Naive thymus-derived CD4-positive, alpha-beta T cell (primary cell): ENCODE measurements at regions of chr17 and their contacts with region 1.

Region 1: DNA sequence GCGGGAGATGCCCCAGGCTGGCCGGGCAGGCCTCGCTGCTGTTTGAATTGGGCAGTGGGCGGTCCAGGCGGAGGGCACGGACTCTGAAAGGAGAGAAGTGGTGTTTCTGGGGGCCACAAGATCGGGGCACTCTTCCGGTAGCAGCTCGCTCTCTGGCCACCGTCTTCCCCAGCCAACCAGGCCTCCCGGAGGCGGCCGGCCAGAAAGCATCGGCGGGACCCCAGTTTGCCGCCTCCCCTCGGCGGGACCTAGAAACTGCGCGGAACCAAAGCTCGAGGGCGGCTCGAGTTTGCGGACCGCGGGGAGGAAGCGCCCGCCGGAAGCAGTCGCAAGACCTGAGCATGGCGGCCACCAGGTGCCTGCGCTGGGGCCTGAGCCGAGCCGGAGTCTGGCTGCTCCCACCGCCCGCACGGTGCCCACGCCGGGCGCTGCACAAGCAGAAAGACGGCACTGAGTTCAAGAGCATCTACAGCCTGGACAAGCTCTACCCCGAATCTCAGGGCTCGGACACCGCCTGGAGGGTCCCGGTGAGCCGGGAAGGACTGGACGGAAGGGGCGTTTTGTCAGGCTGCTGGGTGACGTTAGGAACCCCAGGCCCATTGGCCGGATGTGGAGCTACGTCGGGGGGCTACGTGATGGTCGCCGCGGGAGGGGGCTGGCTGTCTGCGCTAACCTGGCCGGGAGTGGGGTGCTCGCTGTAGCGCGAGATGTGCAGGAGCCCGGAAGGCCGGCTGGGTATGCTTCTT is at the start of gene MRPL58:
- DNase-seq: peak; percentile 66 to 81 (median 75)
- ATAC-seq: peak; percentile 97
- H3K4me3 ChIP-seq: peak within 1 kb of the TSS; percentile 69
- H3K4me3 Mint-ChIP-seq: peak within 1 kb of the TSS; percentile 76 to 98 (median 94)
- H3K27ac ChIP-seq: peak within 1 kb of the TSS; percentile 83
- H3K27ac Mint-ChIP-seq: peak within 1 kb of the TSS; percentile 5 to 97 (median 92)
- H3K4me1 ChIP-seq: peaks cover 9 to 14% of the 10 kb centered on the region in 2 donors
- H3K4me1 Mint-ChIP-seq: peaks cover 25 to 38% (median 35%) of the 10 kb centered on the region in 7 donors
- H3K27me3 ChIP-seq: no peaks in the 10 kb centered on the region
- H3K27me3 Mint-ChIP-seq: peaks cover 0 to 4% (median 0%) of the 10 kb centered on the region in 5 donors
- total RNA-seq, gene MRPL58: 11.7 to 46.1 (median 23.0) TPM

Region 2: DNA sequence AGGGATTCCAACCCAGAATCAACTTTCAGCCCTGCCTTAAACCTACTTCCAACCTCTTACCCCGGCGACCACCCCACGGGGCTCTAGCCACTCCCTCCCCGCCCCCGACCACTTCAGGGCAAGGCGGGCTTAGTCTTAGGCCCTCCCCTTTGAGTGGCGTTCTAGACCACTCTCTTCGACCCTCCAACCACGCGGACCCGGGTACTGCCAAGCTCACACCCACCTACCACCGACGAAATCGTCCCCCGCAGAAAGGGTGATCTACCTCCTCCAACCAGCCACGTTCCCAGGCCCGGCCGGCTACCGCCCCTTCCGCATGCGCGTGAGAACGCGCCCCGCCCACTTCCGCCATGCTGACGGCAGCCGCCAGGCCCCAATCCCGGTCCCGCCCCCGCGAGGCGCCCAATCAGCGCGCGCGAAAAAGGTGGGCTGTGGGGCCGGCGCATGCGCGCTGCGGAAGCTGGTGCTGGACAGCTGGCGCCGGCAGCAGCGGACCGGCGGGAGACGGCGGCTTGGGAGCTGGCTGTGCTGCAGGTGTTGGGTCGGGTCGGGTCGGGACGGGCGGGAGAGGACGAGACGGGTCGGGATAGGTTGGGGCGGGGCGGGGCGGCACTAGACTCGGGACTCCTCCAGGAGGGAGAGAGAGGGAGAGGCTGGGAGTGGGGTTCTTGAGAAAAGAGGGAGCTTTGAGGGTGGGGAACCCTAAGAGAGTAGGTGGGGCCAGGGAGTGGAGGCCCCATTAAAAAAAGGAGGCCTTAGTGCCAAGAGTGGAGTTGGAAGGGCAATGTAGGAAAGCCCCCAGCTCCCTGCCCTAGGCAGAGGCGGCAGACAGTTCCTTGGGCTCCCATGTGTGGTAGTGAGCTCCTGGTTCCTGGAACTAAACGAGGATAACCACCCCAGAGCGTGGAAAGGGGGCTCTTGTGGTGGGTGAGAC is 236.2 kb before region 1 on chr17 and contains the start of gene NAT9:
- CTCF ChIA-PET with region 1: no interaction called
- POLR2A ChIA-PET with region 1: no interaction called
- intact Hi-C with region 1: no loop called
- DNase-seq: peak; percentile 95 to 100 (median 98)
- ATAC-seq: peak; percentile 86
- H3K4me3 ChIP-seq: peak within 1 kb of the TSS; percentile 91
- H3K4me3 Mint-ChIP-seq: peak within 1 kb of the TSS; percentile 96 to 100 (median 98)
- H3K27ac ChIP-seq: peak within 1 kb of the TSS; percentile 78
- H3K27ac Mint-ChIP-seq: peak within 1 kb of the TSS; percentile 91 to 99 (median 96)
- H3K4me1 ChIP-seq: peaks cover 49 to 51% of the 10 kb centered on the region in 2 donors
- H3K4me1 Mint-ChIP-seq: peaks cover 32 to 76% (median 66%) of the 10 kb centered on the region in 7 donors
- H3K27me3 ChIP-seq: no peaks in the 10 kb centered on the region
- H3K27me3 Mint-ChIP-seq: no peaks in the 10 kb centered on the region
- total RNA-seq, gene NAT9: 41.4 to 78.8 (median 56.9) TPM

Region 3: DNA sequence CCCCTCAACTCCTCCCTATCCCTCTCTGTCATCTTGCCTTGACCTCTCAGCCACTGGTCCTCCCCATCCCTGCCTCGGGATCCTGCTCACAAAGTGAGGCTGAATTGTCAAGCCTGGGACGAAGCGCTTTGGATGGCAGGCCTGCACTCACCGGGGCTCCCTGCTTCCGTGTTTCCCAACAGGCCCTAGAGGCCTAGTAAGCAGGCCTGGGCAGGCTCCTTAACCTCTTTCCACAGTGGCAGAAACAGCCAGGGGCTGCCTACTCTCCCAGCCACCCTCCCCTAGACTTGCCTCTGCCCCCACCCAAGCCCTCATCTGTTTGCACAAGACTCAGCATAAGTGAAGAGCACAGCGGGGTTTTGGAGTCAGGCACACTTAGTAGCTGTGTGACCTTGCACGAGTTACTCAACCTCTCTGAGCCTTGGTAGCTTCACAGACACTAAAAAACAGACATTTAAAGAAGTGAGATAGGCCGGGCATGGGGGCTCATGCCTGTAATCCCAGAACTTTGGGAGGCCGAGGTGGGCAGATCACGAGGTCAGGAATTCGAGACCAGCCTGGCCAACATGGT is 114.1 kb before region 1 on chr17:
- CTCF ChIA-PET with region 1: no interaction called
- POLR2A ChIA-PET with region 1: no interaction called
- intact Hi-C with region 1: no loop called
- DNase-seq: no peak
- ATAC-seq: no peak
- H3K4me3 ChIP-seq: no peak overlapping the region
- H3K4me3 Mint-ChIP-seq: no peak overlapping the region
- H3K27ac ChIP-seq: no peak overlapping the region
- H3K27ac Mint-ChIP-seq: no peak overlapping the region
- H3K4me1 ChIP-seq: no peaks in the 10 kb centered on the region
- H3K4me1 Mint-ChIP-seq: peaks cover 0 to 11% (median 4%) of the 10 kb centered on the region in 7 donors
- H3K27me3 ChIP-seq: peaks cover 0 to 6% of the 10 kb centered on the region in 2 donors
- H3K27me3 Mint-ChIP-seq: peaks cover 25 to 46% (median 35%) of the 10 kb centered on the region in 5 donors

Region 4: GRCh38 chr17:74972107-74972972 is 40.2 kb before region 1 on chr17 and contains the start of gene HID1:
- CTCF ChIA-PET with region 1: interaction called, 13 read pairs
- POLR2A ChIA-PET with region 1: interaction called, 5 read pairs
- intact Hi-C with region 1: no loop called
- DNase-seq: peak; percentile 60 to 79 (median 74)
- ATAC-seq: peak; percentile 93
- H3K4me3 ChIP-seq: peak within 1 kb of the TSS; percentile 58
- H3K4me3 Mint-ChIP-seq: peak within 1 kb of the TSS; percentile 80 to 98 (median 87)
- H3K27ac ChIP-seq: peak within 1 kb of the TSS; percentile 51
- H3K27ac Mint-ChIP-seq: peak within 1 kb of the TSS in 8 of 9 donors; percentile 56 to 86 (median 80)
- H3K4me1 ChIP-seq: peaks cover 4 to 9% of the 10 kb centered on the region in 2 donors
- H3K4me1 Mint-ChIP-seq: peaks cover 5 to 18% (median 7%) of the 10 kb centered on the region in 7 donors
- H3K27me3 ChIP-seq: no peaks in the 10 kb centered on the region
- H3K27me3 Mint-ChIP-seq: peaks cover 0 to 55% (median 7%) of the 10 kb centered on the region in 5 donors
- total RNA-seq, gene HID1: 0.60 to 25.2 (median 14.8) TPM

Region 5: GRCh38 chr17:74987418-74987908 is 25.1 kb before region 1 on chr17 and contains the start of gene CDR2L:
- CTCF ChIA-PET with region 1: interaction called, 4 read pairs
- POLR2A ChIA-PET with region 1: interaction called, 22 read pairs
- intact Hi-C with region 1: loop called (anchors 1 to 2 kb)
- DNase-seq: peak; percentile 87 to 94 (median 90)
- ATAC-seq: peak; percentile 98
- H3K4me3 ChIP-seq: peak within 1 kb of the TSS; percentile 44
- H3K4me3 Mint-ChIP-seq: peak within 1 kb of the TSS; percentile 84 to 94 (median 89)
- H3K27ac ChIP-seq: peak within 1 kb of the TSS; percentile 8
- H3K27ac Mint-ChIP-seq: peak within 1 kb of the TSS in 8 of 9 donors; percentile 10 to 83 (median 66)
- H3K4me1 ChIP-seq: peaks cover 6 to 14% of the 10 kb centered on the region in 2 donors
- H3K4me1 Mint-ChIP-seq: peaks cover 5 to 15% (median 10%) of the 10 kb centered on the region in 7 donors
- H3K27me3 ChIP-seq: no peaks in the 10 kb centered on the region
- H3K27me3 Mint-ChIP-seq: peaks cover 0 to 59% (median 0%) of the 10 kb centered on the region in 5 donors
- total RNA-seq, gene CDR2L: 0.08 to 0.17 (median 0.16) TPM in 3 of 5 experiments, not detected in the others

Region 6: GRCh38 chr17:75046582-75047289 is 34.2 kb after region 1 on chr17 and contains the starts of genes ATP5PD and KCTD2:
- CTCF ChIA-PET with region 1: interaction called, 4 read pairs
- POLR2A ChIA-PET with region 1: interaction called, 19 read pairs
- intact Hi-C with region 1: loop called (anchors 1 kb)
- DNase-seq: peak; percentile 82 to 93 (median 91)
- ATAC-seq: peak; percentile 98
- H3K4me3 ChIP-seq: peak within 1 kb of the TSS; percentile 77
- H3K4me3 Mint-ChIP-seq: peak within 1 kb of the TSS; percentile 95 to 99 (median 98)
- H3K27ac ChIP-seq: peak within 1 kb of the TSS; percentile 93
- H3K27ac Mint-ChIP-seq: peak within 1 kb of the TSS; percentile 92 to 99 (median 96)
- H3K4me1 ChIP-seq: peaks cover 13 to 16% of the 10 kb centered on the region in 2 donors
- H3K4me1 Mint-ChIP-seq: peaks cover 30 to 62% (median 49%) of the 10 kb centered on the region in 7 donors
- H3K27me3 ChIP-seq: no peaks in the 10 kb centered on the region
- H3K27me3 Mint-ChIP-seq: no peaks in the 10 kb centered on the region
- total RNA-seq, gene ATP5PD: 113 to 195 (median 161) TPM
- total RNA-seq, gene KCTD2: 19.5 to 35.7 (median 23.0) TPM

Region 7: GRCh38 chr17:75069783-75070182 is 57.3 kb after region 1 on chr17:
- CTCF ChIA-PET with region 1: interaction called, 6 read pairs
- POLR2A ChIA-PET with region 1: interaction called, 11 read pairs
- intact Hi-C with region 1: no loop called
- DNase-seq: peak in 1 of 9 donors; percentile 40
- ATAC-seq: peak; percentile 47
- H3K4me3 ChIP-seq: no peak overlapping the region
- H3K4me3 Mint-ChIP-seq: peak overlapping the region in 1 of 10 donors; percentile 54
- H3K27ac ChIP-seq: no peak overlapping the region
- H3K27ac Mint-ChIP-seq: peak overlapping the region in 7 of 9 donors; percentile 14 to 75 (median 42)
- H3K4me1 ChIP-seq: peaks cover 7 to 9% of the 10 kb centered on the region in 2 donors
- H3K4me1 Mint-ChIP-seq: peaks cover 13 to 36% (median 28%) of the 10 kb centered on the region in 7 donors
- H3K27me3 ChIP-seq: no peaks in the 10 kb centered on the region
- H3K27me3 Mint-ChIP-seq: no peaks in the 10 kb centered on the region